HEK293 (cell line): ENCODE measurements at regions of chr1 and their contacts with region 1.

Region 1: DNA sequence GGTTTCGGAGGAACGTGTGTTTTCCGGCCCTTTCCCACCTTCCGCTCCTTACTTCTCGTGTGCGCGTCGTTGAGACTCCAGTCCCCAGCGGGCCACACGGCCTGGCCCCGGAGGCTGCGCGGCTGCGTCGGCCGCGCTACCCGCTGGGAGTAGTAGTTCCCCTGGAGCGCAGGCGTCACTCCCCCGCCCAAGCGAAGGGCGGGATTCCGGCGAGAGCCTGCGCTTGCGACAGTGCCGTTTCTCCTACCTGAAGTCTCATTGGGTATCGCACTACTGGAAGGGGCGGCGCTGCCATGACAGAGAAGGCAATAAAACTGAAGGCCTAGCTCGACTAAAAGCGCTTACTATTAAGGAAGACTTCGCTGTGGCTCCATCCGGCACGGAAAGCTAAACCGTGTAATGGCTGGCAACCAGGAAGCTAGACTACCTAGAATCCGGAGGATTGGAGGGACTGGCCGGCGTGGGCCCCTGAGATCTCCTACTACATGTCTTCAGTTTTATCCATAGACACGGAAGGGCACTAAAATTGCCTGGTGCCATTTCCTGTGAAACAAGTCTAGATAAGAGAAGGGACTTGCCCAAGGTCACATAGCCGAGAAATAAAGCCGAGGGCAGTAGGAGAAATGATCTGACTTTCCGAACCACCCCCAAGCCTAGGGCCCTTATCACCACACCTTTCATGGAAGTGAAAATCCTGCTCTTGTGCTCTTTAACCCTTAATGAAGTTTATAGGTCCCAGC is 797 bp upstream of the TMEM69 start:
- H3K4me3 ChIP-seq: peak overlapping the region; percentile 94
- H3K27ac ChIP-seq: peak overlapping the region; percentile 81
- H3K4me1 ChIP-seq: peaks cover 4% of the 10 kb centered on the region; the same call in 1 of the 2 replicates
- CTCF ChIP-seq: no peak

Region 2: DNA sequence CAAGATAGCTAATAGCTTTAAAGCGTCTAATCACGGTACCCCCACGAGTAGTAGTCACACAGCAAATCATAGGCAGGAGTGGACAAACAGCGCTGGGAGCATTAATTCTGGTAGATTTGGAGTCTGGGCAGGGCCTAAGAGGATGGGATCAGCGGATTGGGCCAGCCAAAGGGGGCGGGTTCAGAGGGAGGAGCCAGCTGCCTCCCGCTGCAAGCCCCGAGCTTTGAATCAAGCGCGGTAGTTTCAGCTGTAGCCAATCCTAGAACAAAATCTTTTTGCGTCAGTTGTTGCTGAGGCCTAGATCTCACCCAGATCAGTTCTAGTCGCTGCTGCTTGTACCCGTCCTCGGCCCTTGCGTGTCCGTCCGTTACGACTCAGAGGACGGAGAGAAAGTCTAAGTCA is 103.9 kb before region 1 on chr1:
- CTCF ChIA-PET with region 1: no interaction called
- POLR2A ChIA-PET with region 1: interaction called, 20 read pairs
- H3K4me3 ChIP-seq: peak overlapping the region; percentile 79
- H3K27ac ChIP-seq: peak overlapping the region; percentile 90; the same call in 1 of the 2 replicates
- H3K4me1 ChIP-seq: no peaks in the 10 kb centered on the region
- CTCF ChIP-seq: no peak

Region 3: DNA sequence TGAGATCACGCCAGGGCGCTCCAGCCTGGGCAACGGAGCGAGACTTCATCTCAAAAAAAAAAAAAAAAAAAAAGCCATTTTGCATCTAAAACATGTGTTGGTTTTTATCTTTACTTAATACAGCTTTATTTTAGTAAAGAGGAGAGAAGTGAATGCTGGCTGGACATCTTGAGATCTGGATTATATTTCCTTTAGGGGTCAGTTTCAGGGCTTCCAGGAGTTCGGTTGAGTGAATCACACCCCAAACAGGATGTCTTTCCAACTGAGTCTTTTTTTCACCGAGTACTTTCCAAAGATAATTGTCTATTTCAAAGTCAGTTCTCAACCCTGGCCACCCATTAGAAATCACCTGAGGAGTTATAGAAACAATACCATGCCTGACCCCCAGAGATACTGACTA is 79.9 kb after region 1 on chr1:
- CTCF ChIA-PET with region 1: no interaction called
- POLR2A ChIA-PET with region 1: no interaction called
- H3K4me3 ChIP-seq: no peak overlapping the region
- H3K27ac ChIP-seq: no peak overlapping the region
- H3K4me1 ChIP-seq: no peaks in the 10 kb centered on the region
- CTCF ChIP-seq: no peak

Region 4: DNA sequence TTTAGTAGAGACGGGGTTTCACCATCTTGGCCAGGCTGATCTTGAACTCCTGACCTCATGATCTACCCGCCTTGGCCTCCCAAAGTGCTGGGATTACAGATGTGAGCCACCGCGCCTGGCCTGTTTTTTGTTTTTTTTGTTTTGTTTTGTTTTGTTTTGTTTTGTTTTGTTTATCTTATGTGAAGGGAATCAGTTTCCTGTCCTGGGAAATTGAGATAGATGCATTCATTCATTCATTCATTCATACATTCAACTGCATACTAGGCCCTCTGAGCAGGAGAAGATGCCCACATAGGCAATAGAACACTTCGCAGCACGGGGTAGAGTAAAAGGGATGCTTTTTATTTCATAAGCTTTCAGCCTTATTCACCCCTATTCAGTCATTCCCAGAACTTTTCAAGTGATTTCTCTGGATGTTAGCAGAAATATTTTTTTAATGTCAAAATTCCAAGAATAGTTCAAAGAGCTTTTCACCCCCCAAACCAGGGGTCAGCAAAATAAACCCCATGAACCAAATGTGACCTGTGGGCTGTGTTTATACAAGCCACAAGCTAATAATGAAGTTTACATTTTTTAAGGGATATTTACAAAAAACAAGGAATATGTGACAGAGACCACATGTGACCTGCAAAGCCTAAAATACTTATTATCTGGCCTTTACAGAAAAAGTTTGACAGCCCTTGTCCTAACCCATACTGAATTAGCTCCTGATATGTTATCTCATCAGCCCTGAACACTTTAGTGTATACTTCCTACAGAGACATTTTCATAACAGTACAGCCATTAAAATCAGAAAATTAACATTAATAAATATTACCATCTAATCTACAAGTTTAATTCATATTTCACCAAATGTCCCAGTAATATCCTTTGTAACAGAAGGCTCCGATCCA is 243.3 kb after region 1 on chr1:
- CTCF ChIA-PET with region 1: no interaction called
- POLR2A ChIA-PET with region 1: no interaction called
- H3K4me3 ChIP-seq: no peak overlapping the region
- H3K27ac ChIP-seq: no peak overlapping the region
- H3K4me1 ChIP-seq: peaks cover 4% of the 10 kb centered on the region; the same call in 1 of the 2 replicates
- CTCF ChIP-seq: no peak